Mammary epithelial cell (primary cell): ENCODE measurements at regions of chr3 and their contacts with region 1.

Region 1: DNA sequence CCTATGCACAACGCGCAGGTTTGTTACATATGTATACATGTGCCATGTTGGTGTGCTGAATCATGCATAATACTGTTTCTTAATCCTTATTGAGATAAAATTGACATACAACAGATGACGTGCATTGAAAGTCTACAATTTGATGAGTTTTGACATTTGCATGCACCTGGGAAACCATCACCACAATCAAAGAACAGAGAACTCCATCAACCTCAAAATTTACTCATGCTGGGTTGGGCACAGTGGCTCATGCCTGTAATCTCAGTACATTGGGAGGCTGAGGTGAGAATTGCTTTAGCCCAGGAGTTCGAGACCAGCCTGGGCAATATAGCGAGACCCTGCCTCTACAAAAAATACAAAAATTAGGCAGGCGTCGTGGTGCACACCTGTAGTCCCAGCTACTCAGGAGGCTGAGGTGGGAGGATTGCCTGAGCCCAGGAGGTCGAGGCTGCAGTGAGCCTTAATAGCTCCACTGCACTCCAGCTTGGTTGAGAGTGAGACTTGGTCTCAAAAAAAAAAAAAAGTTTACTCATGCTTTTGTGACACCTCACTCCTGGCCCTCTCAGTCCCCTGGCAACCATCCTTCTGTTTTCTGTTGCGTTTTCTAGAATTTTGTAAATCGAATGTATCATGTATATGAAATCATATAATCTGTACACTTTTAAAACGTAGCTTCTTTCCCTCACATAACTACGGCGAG is 56.6 kb downstream of the BHLHE40 start:
- DNase-seq: no peak
- H3K4me3 ChIP-seq: no peak overlapping the region
- H3K27ac ChIP-seq: no peak overlapping the region
- H3K4me1 ChIP-seq: no peaks in the 10 kb centered on the region
- H3K27me3 ChIP-seq: no peaks in the 10 kb centered on the region
- CTCF ChIP-seq: no peak

Region 2: DNA sequence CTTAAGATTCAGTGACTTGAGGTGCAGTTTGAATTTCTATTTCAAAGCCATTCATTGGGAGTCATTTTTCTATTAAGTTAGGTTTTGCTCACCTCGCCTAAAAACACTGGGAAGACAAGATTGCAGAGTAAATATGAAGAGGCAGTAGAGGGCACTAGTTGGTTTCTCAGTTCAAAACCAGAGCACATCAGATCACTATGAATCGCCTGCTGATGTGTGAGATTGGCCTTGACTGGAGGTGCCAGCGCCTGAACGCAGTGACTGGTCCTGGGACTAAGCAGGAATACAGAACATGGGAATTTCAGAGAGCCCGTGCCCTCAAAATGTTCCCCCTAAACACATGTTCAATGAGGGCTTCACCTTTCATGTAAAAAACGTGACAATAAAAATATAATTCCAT is 313.7 kb before region 1 on chr3:
- CTCF ChIA-PET with region 1: no interaction called
- dilution Hi-C with region 1: no loop called
- in situ Hi-C with region 1: loop called in 1 of 2 experiments (anchors 10 kb)
- intact Hi-C with region 1: no loop called
- DNase-seq: peak; percentile 81
- H3K4me3 ChIP-seq: no peak overlapping the region
- H3K27ac ChIP-seq: peak overlapping the region; percentile 71
- H3K4me1 ChIP-seq: peaks cover 32% of the 10 kb centered on the region
- H3K27me3 ChIP-seq: no peaks in the 10 kb centered on the region
- CTCF ChIP-seq: peak; percentile 37 to 61